ENCODE measurements at regions of chr1 and their contacts with region 1.

Region 1: GRCh38 chr1:228464487-228464983 is 22.6 kb upstream of the RNF187 start:
- DNase-seq: peak; percentile 83 to 92 (median 92)
- H3K4me3 ChIP-seq: peak overlapping the region in 6 of 7 experiments; percentile 26 to 70 (median 58)
- H3K27ac ChIP-seq: no peak overlapping the region
- H3K4me1 ChIP-seq: peaks cover 3 to 23% (median 21%) of the 10 kb centered on the region in 4 experiments
- H3K27me3 ChIP-seq: peaks cover 13 to 62% (median 45%) of the 10 kb centered on the region in 5 experiments

Region 2: DNA sequence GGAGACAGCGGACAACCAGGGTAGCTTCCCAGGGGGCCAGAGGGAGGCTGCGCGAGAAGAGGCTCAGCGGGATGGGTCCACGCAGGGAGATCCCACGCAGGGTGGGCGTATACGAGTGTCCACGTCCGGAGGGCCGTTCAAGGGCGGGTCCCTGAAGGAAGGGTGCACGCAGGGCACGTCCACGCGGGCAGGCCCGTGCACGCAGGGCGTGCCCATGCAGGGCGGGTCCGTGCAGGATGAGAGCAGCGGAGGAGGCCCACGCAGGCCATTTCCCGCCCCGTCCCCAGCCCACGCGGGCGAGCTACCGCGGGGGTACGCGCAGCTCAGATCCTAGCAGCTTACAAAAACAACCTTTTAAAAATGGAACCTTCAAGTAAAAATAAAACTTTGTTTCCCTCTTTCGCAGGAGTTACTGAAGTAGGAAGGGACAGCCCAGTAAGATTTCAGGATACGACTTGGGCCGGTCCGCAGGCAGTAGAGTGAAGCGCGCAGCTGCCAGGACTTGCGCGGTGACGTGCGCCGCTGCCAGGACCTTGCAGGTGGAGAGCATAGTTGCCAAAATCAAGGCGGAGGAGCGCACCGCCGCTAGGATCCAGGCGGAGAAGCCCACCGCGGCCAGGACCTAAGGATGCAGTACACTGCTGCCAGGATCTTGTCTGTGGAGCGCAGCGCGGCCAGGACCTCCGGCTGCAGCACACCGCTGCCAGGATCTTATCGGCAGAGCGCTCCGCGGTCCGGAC is 22.2 kb after region 1 on chr1:
- CTCF ChIA-PET with region 1: interaction called, 17 read pairs
- POLR2A ChIA-PET with region 1: no interaction called
- DNase-seq: peak; percentile 82 to 92 (median 85)
- H3K4me3 ChIP-seq: peak overlapping the region; percentile 86 to 99 (median 95)
- H3K27ac ChIP-seq: peak overlapping the region; percentile 100
- H3K4me1 ChIP-seq: peaks cover 0 to 16% (median 14%) of the 10 kb centered on the region in 4 experiments
- H3K27me3 ChIP-seq: no peaks in the 10 kb centered on the region